Activated B cell treated with CpG ODN at 0.5 μM for 24 hours (primary cell): ENCODE measurements at regions of chr6 and their contacts with region 1.

Region 1: GRCh38 chr6:42782622-42783176 is 847 bp downstream of the BICRAL start:
- DNase-seq: peak; percentile 62
- ATAC-seq: peak; percentile 40
- H3K4me3 Mint-ChIP-seq: peak overlapping the region; percentile 97
- H3K27ac Mint-ChIP-seq: peak overlapping the region; percentile 100
- H3K4me1 Mint-ChIP-seq: peaks cover 36% of the 10 kb centered on the region
- H3K27me3 Mint-ChIP-seq: no peaks in the 10 kb centered on the region
- CTCF ChIP-seq: no peak

Region 2: DNA sequence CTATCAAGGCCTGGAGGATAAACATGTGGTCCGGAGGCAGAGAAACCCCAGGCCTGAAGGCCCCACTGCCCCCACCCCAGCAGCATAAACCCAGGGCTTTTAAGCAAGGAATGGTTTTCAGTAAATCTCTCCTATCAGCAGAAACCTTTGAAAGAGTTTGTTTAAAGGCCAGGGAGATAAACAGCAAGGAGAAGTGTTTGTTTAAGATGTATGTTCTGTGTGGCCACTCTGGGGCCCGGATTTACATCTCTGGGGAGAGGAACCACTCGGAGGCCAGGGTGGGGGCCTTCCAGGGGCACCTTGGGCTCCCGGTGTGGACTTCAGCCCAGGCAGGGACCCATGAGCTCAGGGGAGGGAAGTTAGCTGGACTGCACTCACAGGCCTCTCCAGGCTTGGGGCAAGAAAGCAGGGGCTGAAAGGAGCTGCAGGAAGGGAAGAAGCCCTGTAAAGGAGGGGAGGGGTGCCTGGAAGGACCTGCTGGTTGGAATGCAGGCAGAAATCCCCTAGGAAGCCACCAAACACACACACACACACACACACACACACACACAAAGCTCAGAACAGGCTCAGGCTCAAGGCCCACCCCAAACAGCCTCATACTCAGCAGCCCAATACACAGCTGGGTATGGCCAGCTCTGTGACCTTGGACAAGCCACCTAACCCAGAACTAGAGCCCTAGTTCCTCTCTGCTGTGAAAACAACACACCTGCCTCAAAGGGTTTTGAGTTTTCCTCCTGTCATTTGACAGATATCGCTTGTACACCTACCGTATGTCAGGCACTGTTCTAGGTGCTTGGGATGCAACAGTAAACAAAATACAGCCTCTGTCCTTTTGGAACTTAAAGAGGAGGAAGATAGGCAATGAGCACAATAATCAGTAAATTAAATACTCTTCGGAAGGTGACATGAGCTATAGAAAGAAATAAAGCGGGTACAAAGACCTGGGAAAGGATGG is 1262.7 kb before region 1 on chr6:
- CTCF ChIA-PET with region 1: no interaction called
- POLR2A ChIA-PET with region 1: no interaction called
- intact Hi-C with region 1: no loop called
- DNase-seq: no peak
- ATAC-seq: no peak
- H3K4me3 Mint-ChIP-seq: no peak overlapping the region
- H3K27ac Mint-ChIP-seq: no peak overlapping the region
- H3K4me1 Mint-ChIP-seq: no peaks in the 10 kb centered on the region
- H3K27me3 Mint-ChIP-seq: peaks cover 9% of the 10 kb centered on the region
- CTCF ChIP-seq: no peak

Region 3: GRCh38 chr6:42572523-42572922 is 210.2 kb before region 1 on chr6:
- CTCF ChIA-PET with region 1: no interaction called
- POLR2A ChIA-PET with region 1: interaction called, 10 read pairs
- intact Hi-C with region 1: no loop called
- DNase-seq: peak; percentile 25
- ATAC-seq: peak; percentile 91
- H3K4me3 Mint-ChIP-seq: peak overlapping the region; percentile 63
- H3K27ac Mint-ChIP-seq: peak overlapping the region; percentile 91
- H3K4me1 Mint-ChIP-seq: peaks cover 47% of the 10 kb centered on the region
- H3K27me3 Mint-ChIP-seq: no peaks in the 10 kb centered on the region
- CTCF ChIP-seq: no peak

Region 4: DNA sequence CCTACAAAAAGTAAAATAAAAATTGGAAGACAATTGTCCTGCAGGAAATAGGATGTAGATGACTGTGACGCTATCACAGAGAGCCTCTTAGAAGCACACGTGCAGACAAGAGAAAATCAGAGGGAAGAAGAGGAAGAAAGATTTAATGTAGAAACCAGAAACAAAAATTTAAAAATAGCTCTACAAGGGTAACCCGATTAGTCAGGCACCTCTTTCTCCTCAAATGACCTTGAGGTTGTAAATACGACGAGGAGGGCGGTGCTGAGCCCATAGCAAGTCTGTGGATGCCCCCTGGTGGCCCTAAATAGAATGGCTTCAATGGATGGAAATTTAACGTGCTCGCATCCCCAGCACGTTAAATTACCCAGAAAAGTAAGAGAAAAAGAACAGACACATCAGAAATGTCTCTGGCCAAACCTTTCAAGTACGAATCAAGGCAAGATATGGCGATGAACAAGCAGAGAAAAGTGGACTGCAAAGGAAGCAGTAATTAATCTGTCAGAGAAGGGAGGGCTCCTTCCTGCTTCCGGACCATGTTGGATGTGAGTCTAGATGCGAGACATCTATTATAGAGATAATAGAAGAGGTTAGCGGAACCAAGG is 56.1 kb before region 1 on chr6:
- CTCF ChIA-PET with region 1: no interaction called
- POLR2A ChIA-PET with region 1: interaction called, 104 read pairs
- intact Hi-C with region 1: loop called (anchors 1 kb)
- DNase-seq: no peak
- ATAC-seq: peak; percentile 98
- H3K4me3 Mint-ChIP-seq: peak overlapping the region; percentile 89
- H3K27ac Mint-ChIP-seq: peak overlapping the region; percentile 96
- H3K4me1 Mint-ChIP-seq: peaks cover 19% of the 10 kb centered on the region
- H3K27me3 Mint-ChIP-seq: no peaks in the 10 kb centered on the region
- CTCF ChIP-seq: peak; percentile 84

Region 5: GRCh38 chr6:42796171-42796570 is 13.5 kb after region 1 on chr6:
- CTCF ChIA-PET with region 1: no interaction called
- POLR2A ChIA-PET with region 1: interaction called, 48 read pairs
- intact Hi-C with region 1: no loop called
- DNase-seq: no peak
- ATAC-seq: no peak
- H3K4me3 Mint-ChIP-seq: no peak overlapping the region
- H3K27ac Mint-ChIP-seq: no peak overlapping the region
- H3K4me1 Mint-ChIP-seq: peaks cover 16% of the 10 kb centered on the region
- H3K27me3 Mint-ChIP-seq: no peaks in the 10 kb centered on the region
- CTCF ChIP-seq: no peak

Region 6: GRCh38 chr6:42873313-42873712 is 90.6 kb after region 1 on chr6:
- CTCF ChIA-PET with region 1: interaction called, 3 read pairs
- POLR2A ChIA-PET with region 1: interaction called, 101 read pairs
- intact Hi-C with region 1: no loop called
- DNase-seq: no peak
- ATAC-seq: no peak
- H3K4me3 Mint-ChIP-seq: no peak overlapping the region
- H3K27ac Mint-ChIP-seq: no peak overlapping the region
- H3K4me1 Mint-ChIP-seq: peaks cover 3% of the 10 kb centered on the region
- H3K27me3 Mint-ChIP-seq: no peaks in the 10 kb centered on the region
- CTCF ChIP-seq: no peak

Region 7: GRCh38 chr6:42890311-42891198 is 107.9 kb after region 1 on chr6:
- CTCF ChIA-PET with region 1: no interaction called
- POLR2A ChIA-PET with region 1: interaction called, 44 read pairs
- intact Hi-C with region 1: loop called (anchors 2 kb)
- DNase-seq: peak; percentile 76
- ATAC-seq: peak; percentile 97
- H3K4me3 Mint-ChIP-seq: peak overlapping the region; percentile 97
- H3K27ac Mint-ChIP-seq: peak overlapping the region; percentile 93
- H3K4me1 Mint-ChIP-seq: peaks cover 44% of the 10 kb centered on the region
- H3K27me3 Mint-ChIP-seq: no peaks in the 10 kb centered on the region
- CTCF ChIP-seq: no peak

Region 8: GRCh38 chr6:43059168-43060033 is 276.7 kb after region 1 on chr6 and contains the starts of genes KLC4 and MRPL2:
- CTCF ChIA-PET with region 1: no interaction called
- POLR2A ChIA-PET with region 1: interaction called, 9 read pairs
- intact Hi-C with region 1: loop called (anchors 5 kb)
- DNase-seq: peak; percentile 94
- ATAC-seq: peak; percentile 97
- H3K4me3 Mint-ChIP-seq: peak within 1 kb of the TSS; percentile 95
- H3K27ac Mint-ChIP-seq: peak within 1 kb of the TSS; percentile 97
- H3K4me1 Mint-ChIP-seq: peaks cover 38% of the 10 kb centered on the region
- H3K27me3 Mint-ChIP-seq: no peaks in the 10 kb centered on the region
- CTCF ChIP-seq: no peak
- total RNA-seq, gene KLC4: 17.0 and 19.8 TPM in 2 replicates
- total RNA-seq, gene MRPL2: 43.9 and 47.8 TPM in 2 replicates

Region 9: GRCh38 chr6:44504301-44504791 is 1721.6 kb after region 1 on chr6:
- CTCF ChIA-PET with region 1: no interaction called
- POLR2A ChIA-PET with region 1: no interaction called
- intact Hi-C with region 1: no loop called
- DNase-seq: no peak
- ATAC-seq: no peak
- H3K4me3 Mint-ChIP-seq: no peak overlapping the region
- H3K27ac Mint-ChIP-seq: no peak overlapping the region
- H3K4me1 Mint-ChIP-seq: no peaks in the 10 kb centered on the region
- H3K27me3 Mint-ChIP-seq: peaks cover 11% of the 10 kb centered on the region
- CTCF ChIP-seq: no peak